MCF 10A (cell line): ENCODE measurements at regions of chr1 and their contacts with region 1.

Region 1: DNA sequence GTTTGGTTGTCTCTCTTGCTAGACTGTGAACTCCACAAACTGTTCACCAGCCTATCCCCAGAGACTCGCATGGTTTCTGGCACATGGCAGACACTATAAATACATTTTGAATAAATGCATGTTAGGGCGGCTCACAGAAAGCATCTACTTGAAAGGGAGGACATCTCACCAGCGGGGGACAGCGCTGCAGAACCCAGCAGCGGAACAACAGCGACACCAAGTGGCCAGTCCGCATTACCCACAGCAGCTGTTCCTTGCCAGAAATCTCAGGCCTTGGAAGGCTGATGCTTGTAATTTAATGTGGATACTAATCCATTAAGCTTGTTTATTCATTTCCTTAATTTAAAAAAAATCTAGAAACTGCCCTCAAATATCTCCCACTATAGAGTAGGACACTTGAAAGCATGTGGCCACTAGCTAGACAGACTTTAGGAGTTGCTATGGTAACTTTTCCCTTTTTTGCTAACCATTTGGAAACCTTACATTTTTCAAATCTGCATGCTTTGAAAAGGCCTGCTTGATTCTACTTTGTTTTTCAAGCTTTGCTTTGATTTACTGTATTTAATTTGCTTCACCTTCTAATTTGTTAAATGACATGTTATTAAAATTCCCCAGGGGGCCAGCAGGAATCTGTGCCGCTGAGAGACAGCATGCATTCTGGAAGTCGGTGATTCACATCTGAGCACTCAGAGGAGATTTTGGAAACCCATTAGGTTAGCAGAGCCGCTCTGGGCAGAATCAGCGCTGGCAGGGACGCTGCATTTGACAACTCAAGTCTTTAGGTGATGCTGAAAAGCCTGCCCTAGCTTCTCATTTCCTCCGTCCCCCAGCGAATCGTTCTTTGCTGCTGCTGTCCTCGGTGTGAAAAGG is 63.5 kb upstream of the SSX2IP start:
- DNase-seq: peak; percentile 63
- H3K4me3 Mint-ChIP-seq: no peak overlapping the region
- H3K27ac Mint-ChIP-seq: no peak overlapping the region
- H3K4me1 Mint-ChIP-seq: peaks cover 22% of the 10 kb centered on the region
- H3K27me3 Mint-ChIP-seq: no peaks in the 10 kb centered on the region
- CTCF ChIP-seq: peak; percentile 98

Region 2: DNA sequence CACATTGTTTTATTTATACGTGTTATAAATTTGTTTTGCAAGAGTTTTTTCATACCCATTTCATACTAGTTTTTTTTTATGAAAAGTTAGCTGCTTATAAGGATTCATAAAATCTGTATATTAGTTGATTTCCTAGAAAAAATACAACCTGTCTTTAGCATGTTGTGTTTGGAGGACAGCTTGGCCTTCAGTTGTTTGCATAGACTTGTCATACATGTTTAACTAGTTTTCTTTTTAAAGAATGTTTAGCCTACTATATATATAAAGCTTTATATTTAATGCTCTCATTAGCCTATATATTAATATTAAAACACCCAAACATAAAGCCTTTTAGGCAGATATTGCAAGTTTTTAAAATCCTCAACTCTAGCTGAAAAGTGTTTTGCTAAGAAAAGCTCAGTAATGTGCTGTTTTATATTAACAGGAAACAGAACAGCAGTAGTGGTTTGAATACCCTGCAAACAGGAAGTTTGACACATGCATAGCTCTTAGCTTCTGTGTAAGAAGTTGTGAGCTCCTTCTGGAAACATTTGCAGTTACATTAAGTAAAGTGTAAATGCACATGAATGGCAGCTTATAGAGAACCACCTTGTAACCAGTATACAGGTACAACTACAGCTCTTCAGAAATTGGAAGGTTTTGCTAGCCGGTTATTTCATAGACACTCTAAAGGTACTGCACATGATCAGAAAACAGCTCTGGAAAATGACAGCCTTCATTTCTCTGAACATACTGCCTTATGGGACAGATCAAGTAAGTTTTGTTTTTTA is 609.8 kb before region 1 on chr1 and contains the start of gene PRKACB:
- CTCF ChIA-PET with region 1: interaction called, 28 read pairs
- POLR2A ChIA-PET with region 1: interaction called, 3 read pairs
- intact Hi-C with region 1: loop called (anchors 2 kb)
- DNase-seq: peak; percentile 9
- H3K4me3 Mint-ChIP-seq: no peak within 1 kb of the TSS
- H3K27ac Mint-ChIP-seq: no peak within 1 kb of the TSS
- H3K4me1 Mint-ChIP-seq: no peaks in the 10 kb centered on the region
- H3K27me3 Mint-ChIP-seq: no peaks in the 10 kb centered on the region
- CTCF ChIP-seq: no peak
- total RNA-seq, gene PRKACB: 12.8 and 14.8 TPM in 2 replicates

Region 3: DNA sequence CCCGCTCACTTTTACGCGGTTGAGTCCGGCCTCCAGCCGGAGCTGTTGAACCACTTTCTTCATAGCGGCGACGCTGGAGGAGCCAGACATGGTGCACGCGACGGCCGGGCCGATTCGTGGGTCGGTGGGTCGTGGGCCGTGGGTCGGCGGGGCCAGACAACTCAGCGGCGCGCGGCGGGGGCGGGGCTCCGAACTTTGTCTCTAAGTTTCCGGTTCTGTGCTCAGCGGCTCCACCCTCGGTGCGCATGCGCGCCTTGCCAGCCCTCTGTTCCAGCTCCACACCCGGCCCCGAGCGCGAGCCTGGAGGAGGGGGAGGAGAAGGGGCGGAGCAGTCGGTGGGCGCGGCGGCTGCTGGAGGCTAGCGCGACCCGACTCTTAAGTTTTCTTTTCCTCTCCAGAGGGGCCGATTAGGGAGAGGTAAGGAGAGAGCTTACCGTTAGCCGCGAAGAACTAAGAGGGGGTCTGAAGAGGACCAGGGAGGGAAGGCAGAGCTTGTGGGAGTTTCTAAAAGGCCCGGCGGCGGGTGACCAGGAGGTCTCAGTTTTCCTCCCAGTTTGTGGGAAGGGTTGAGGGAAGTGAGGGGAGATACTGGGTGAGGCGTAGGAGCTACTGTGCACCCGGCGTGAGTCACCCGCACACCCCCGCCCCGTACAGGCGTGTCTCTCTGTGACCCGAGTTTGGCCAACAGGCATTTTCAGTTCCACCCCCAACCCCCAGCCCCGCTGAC is 247.6 kb before region 1 on chr1 and contains the starts of genes GNG5 and SPATA1:
- CTCF ChIA-PET with region 1: interaction called, 4 read pairs
- POLR2A ChIA-PET with region 1: interaction called, 16 read pairs
- intact Hi-C with region 1: loop called (anchors 1 kb)
- DNase-seq: peak; percentile 97
- H3K4me3 Mint-ChIP-seq: peak within 1 kb of the TSS; percentile 94
- H3K27ac Mint-ChIP-seq: peak within 1 kb of the TSS; percentile 94
- H3K4me1 Mint-ChIP-seq: peaks cover 25% of the 10 kb centered on the region
- H3K27me3 Mint-ChIP-seq: no peaks in the 10 kb centered on the region
- CTCF ChIP-seq: no peak
- total RNA-seq, gene GNG5: 121 and 122 TPM in 2 replicates
- total RNA-seq, gene SPATA1: 1.0 and 1.2 TPM in 2 replicates

Region 4: DNA sequence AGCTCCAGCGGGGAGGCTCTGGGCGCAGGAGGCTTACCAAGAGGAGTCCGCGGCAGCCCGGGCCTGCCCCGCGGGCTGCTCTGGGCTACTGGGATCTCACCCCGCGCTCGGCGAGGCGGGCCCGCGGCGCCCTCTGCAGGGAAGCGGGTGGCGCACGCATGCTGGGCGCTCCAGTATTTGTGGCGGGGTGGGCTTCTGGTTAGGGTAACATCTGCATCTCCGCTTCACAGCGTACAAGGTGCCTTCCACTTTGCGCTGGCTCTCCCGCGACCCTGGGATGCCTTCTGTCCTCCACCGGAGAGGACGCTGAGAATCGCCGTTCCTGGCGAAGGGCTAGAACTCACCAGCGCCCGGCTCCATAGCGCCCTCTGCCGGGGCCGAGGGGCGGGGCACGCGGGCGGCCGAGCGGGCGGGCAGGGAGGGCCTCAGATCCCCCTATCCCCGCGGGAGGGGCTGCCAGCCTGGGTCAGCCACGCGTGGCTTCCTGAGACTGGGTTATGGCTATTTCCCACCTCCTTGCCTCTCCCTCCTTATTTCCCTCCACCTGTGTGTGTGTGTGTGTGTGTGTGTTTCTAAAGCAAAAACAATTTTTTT is 132.9 kb before region 1 on chr1:
- CTCF ChIA-PET with region 1: interaction called, 19 read pairs
- POLR2A ChIA-PET with region 1: interaction called, 5 read pairs
- intact Hi-C with region 1: no loop called
- DNase-seq: peak; percentile 75
- H3K4me3 Mint-ChIP-seq: peak overlapping the region; percentile 81
- H3K27ac Mint-ChIP-seq: peak overlapping the region; percentile 78
- H3K4me1 Mint-ChIP-seq: peaks cover 12% of the 10 kb centered on the region
- H3K27me3 Mint-ChIP-seq: no peaks in the 10 kb centered on the region
- CTCF ChIP-seq: peak; percentile 97

Region 5: GRCh38 chr1:84690397-84691121 is 63.2 kb before region 1 on chr1 and contains the start of gene SSX2IP:
- CTCF ChIA-PET with region 1: interaction called, 16 read pairs
- POLR2A ChIA-PET with region 1: interaction called, 49 read pairs
- intact Hi-C with region 1: loop called (anchors 2 kb)
- DNase-seq: peak; percentile 97
- H3K4me3 Mint-ChIP-seq: peak within 1 kb of the TSS; percentile 97
- H3K27ac Mint-ChIP-seq: peak within 1 kb of the TSS; percentile 83
- H3K4me1 Mint-ChIP-seq: peaks cover 40% of the 10 kb centered on the region
- H3K27me3 Mint-ChIP-seq: no peaks in the 10 kb centered on the region
- CTCF ChIP-seq: no peak
- total RNA-seq, gene SSX2IP: 19.4 and 20.5 TPM in 2 replicates

Region 6: DNA sequence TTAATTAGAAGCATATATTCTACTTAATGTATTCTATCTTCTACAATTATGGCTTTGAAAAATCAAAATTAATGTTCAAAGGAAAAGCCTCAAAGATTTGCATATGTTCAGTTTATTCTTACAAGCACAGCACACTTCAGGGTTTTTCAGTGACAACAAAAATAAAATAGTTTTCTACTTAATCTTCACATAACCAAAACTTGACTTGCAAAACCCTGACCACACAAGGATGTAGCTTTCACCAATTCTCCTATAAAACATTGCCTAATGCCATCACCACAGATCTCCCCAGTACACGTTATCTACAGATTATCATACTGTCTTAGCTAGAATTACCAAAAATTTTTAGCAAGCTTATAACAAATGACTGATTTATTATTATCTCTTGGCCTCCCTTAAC is 116.0 kb after region 1 on chr1:
- CTCF ChIA-PET with region 1: no interaction called
- POLR2A ChIA-PET with region 1: no interaction called
- intact Hi-C with region 1: no loop called
- DNase-seq: no peak
- H3K4me3 Mint-ChIP-seq: no peak overlapping the region
- H3K27ac Mint-ChIP-seq: no peak overlapping the region
- H3K4me1 Mint-ChIP-seq: no peaks in the 10 kb centered on the region
- H3K27me3 Mint-ChIP-seq: no peaks in the 10 kb centered on the region
- CTCF ChIP-seq: no peak